Ovary (tissue), 10 donors: ENCODE measurements at regions of chrX and their contacts with region 1.

Region 1: DNA sequence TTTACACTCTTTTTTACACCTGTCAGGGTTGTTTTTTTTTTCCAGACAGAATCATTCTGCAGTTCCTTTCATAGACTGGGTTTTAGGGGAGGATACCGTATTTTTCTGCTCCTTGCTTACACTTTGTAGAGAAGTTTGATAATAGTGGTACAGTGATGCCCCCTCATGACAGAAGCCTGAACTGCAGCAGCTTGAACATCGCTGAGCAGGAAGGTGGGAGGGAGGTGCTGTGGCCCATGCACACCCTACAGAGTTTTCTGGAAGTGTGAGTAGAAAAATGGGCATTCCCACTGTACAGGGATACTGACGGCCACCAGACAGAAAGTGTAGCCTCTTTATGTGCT is 54.5 kb downstream of the RAB40A start:
- DNase-seq: peak; percentile 62 to 83 (median 78)
- H3K4me3 ChIP-seq: peak overlapping the region; percentile 6
- H3K27ac ChIP-seq: no peak overlapping the region
- H3K4me1 ChIP-seq: no peaks in the 10 kb centered on the region
- H3K27me3 ChIP-seq: no peaks in the 10 kb centered on the region
- CTCF ChIP-seq: peak; percentile 33 to 65 (median 51)
- EP300 ChIP-seq: no peak
- POLR2A ChIP-seq: no peak

Region 2: DNA sequence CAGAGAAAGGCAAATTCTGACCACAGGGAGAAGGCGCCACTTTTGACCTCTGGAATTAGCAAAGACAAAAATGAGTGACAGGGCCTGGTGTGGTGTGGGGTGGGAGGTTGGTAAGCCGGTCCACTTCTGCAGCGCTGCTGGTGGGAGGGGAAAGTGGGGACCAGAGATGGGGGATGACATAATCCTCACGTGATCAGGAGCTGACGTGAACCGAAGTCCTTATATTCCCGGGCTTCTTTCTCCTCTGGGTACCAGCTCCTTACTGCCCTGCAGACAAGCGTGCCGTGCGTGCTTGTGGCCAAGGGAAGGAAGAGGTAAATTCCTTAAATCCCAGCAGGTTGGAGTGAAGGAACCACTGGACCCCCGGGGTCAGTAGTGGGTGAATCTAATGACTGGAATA is 134.8 kb before region 1 on chrX and contains the start of gene TCEAL7:
- intact Hi-C with region 1: loop called in 1 of 4 experiments (anchors 10 kb)
- DNase-seq: peak; percentile 53 to 72 (median 53)
- H3K4me3 ChIP-seq: peak within 1 kb of the TSS; percentile 19
- H3K27ac ChIP-seq: peak within 1 kb of the TSS; percentile 11 to 68
- H3K4me1 ChIP-seq: no peaks in the 10 kb centered on the region
- H3K27me3 ChIP-seq: no peaks in the 10 kb centered on the region
- CTCF ChIP-seq: no peak
- EP300 ChIP-seq: no peak
- POLR2A ChIP-seq: peak; percentile 65
- total RNA-seq, gene TCEAL7: 12.9 to 44.9 (median 21.6) TPM

Region 3: GRCh38 chrX:103343105-103343504 is 121.6 kb before region 1 on chrX:
- intact Hi-C with region 1: loop called in 3 of 4 experiments (anchors 5 to 10 kb)
- DNase-seq: peak in 4 of 5 donors; percentile 41 to 77 (median 58)
- H3K4me3 ChIP-seq: no peak overlapping the region
- H3K27ac ChIP-seq: no peak overlapping the region
- H3K4me1 ChIP-seq: no peaks in the 10 kb centered on the region
- H3K27me3 ChIP-seq: no peaks in the 10 kb centered on the region
- CTCF ChIP-seq: peak; percentile 15 to 72 (median 62)
- EP300 ChIP-seq: no peak
- POLR2A ChIP-seq: no peak